Activated naive CD4-positive, alpha-beta T cell treated with anti-CD3 and anti-CD28 coated beads, Interleukin-2, amount 10 ng/mL, durations not matched to agents 7 days and 5 days (primary cell): ENCODE measurements at regions of chr2 and their contacts with region 1.

Region 1: DNA sequence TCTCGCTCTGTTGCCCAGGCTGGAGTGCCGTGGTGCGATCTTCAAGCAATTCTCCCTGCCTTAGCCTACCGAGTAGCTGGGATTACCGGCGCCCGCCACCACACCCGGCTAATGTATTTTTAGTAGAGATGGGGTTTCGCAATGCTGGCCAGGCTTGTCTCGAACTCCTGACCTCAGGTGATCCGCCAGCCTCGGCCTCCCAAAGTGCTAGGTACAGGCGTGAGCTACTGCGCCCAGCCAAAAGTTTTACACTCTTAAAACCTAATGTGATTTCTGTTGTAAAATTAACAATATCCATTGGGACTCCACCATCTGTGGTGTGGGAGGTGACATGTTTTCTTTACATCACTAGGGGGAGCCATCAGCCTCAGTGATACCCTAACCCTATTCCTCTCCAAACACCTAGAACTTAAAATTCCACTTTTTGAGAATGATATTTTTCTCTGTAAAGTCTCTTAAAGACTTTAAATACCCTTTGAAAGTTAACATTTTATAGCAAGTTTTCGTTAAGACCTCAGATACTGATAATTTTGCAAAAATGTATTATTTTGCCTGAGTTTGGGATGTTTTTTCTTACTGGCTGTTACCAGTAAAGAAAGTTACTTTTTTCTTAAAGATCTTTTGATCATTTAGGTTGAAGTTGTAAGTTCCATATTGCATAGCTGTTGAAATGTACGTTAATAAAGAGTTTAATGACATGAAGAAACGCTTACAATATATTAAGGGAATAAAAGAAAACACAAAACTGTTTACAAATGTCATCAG is 11.6 kb upstream of the EIF2AK2 start:
- DNase-seq: peak; percentile 40
- H3K4me3 Mint-ChIP-seq: no peak overlapping the region
- H3K27ac Mint-ChIP-seq: no peak overlapping the region
- H3K4me1 Mint-ChIP-seq: no peaks in the 10 kb centered on the region
- H3K27me3 Mint-ChIP-seq: peaks cover 15% of the 10 kb centered on the region

Region 2: GRCh38 chr2:37059841-37060240 is 108.6 kb before region 1 on chr2:
- CTCF ChIA-PET with region 1: no interaction called
- DNase-seq: no peak
- H3K4me3 Mint-ChIP-seq: no peak overlapping the region
- H3K27ac Mint-ChIP-seq: no peak overlapping the region
- H3K4me1 Mint-ChIP-seq: no peaks in the 10 kb centered on the region
- H3K27me3 Mint-ChIP-seq: no peaks in the 10 kb centered on the region

Region 3: GRCh38 chr2:37156857-37157714 is 11.3 kb before region 1 on chr2 and contains the start of gene EIF2AK2:
- CTCF ChIA-PET with region 1: interaction called, 10 read pairs
- DNase-seq: peak; percentile 92
- H3K4me3 Mint-ChIP-seq: peak within 1 kb of the TSS; percentile 97
- H3K27ac Mint-ChIP-seq: peak within 1 kb of the TSS; percentile 88
- H3K4me1 Mint-ChIP-seq: peaks cover 46% of the 10 kb centered on the region
- H3K27me3 Mint-ChIP-seq: no peaks in the 10 kb centered on the region

Region 4: GRCh38 chr2:37215250-37215649 is 46.9 kb after region 1 on chr2:
- CTCF ChIA-PET with region 1: no interaction called
- DNase-seq: no peak
- H3K4me3 Mint-ChIP-seq: no peak overlapping the region
- H3K27ac Mint-ChIP-seq: no peak overlapping the region
- H3K4me1 Mint-ChIP-seq: peaks cover 3% of the 10 kb centered on the region
- H3K27me3 Mint-ChIP-seq: no peaks in the 10 kb centered on the region